Adrenal gland (tissue), 19 donors: ENCODE measurements at regions of chr17 and their contacts with region 1.

Region 1: GRCh38 chr17:64599187-64599676 is 62.9 kb downstream of the SMURF2 start:
- DNase-seq: no peak
- H3K4me3 ChIP-seq: no peak overlapping the region
- H3K27ac ChIP-seq: no peak overlapping the region
- H3K4me1 ChIP-seq: peaks cover 6 to 36% of the 10 kb centered on the region in 2 donors
- H3K27me3 ChIP-seq: no peaks in the 10 kb centered on the region
- CTCF ChIP-seq: no peak
- POLR2A ChIP-seq: no peak

Region 2: DNA sequence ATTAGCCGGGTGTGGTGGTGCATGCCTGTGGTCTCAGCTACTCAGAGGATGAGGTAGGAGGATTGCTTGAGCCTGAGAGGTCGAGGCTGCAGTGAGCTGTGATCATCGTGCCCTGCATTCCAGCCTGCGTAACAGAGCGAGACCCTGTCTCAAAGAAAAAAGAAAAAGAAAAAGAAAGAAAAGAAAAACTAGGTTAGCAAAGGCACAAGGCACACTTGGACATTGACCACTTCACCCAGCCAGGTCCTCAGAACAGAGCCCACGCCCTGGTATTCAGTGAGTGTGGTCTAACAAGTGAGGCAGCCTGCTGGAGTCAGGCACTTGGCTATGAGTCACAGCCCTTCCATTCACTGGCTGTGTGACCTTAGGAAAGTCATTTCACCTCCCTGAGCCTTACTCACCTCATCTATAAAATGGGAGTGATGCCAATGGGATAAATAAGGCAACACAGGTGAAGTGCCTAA is 139.9 kb before region 1 on chr17:
- intact Hi-C with region 1: no loop called
- DNase-seq: no peak
- H3K4me3 ChIP-seq: no peak overlapping the region
- H3K27ac ChIP-seq: no peak overlapping the region
- H3K4me1 ChIP-seq: no peaks in the 10 kb centered on the region
- H3K27me3 ChIP-seq: no peaks in the 10 kb centered on the region
- CTCF ChIP-seq: no peak
- POLR2A ChIP-seq: no peak

Region 3: GRCh38 chr17:64547319-64547718 is 51.9 kb before region 1 on chr17:
- intact Hi-C with region 1: no loop called
- DNase-seq: no peak
- H3K4me3 ChIP-seq: no peak overlapping the region
- H3K27ac ChIP-seq: no peak overlapping the region
- H3K4me1 ChIP-seq: no peaks in the 10 kb centered on the region
- H3K27me3 ChIP-seq: no peaks in the 10 kb centered on the region
- CTCF ChIP-seq: no peak
- POLR2A ChIP-seq: no peak

Region 4: DNA sequence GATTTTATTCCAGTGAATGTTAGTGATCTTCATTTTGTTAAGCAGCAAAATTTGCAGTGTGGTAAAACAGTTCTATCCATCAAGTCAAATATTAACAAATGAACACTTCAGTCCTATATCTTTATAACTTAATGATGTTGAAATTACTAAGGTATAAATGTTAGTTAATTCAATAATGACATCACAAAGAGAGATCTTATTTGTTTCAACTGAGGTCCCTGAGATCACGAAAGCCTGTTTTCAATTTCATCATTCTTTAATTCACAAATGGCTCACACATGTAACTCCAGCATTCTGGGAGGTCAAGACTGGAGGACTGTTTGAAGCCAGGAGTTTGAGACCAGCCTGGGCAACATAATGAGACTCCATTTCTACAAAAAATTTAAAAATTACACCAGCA is 49.0 kb after region 1 on chr17:
- intact Hi-C with region 1: loop called in 1 of 2 experiments (anchors 10 kb)
- DNase-seq: no peak
- H3K4me3 ChIP-seq: no peak overlapping the region
- H3K27ac ChIP-seq: no peak overlapping the region
- H3K4me1 ChIP-seq: peaks cover 3 to 26% of the 10 kb centered on the region in 2 donors
- H3K27me3 ChIP-seq: no peaks in the 10 kb centered on the region
- CTCF ChIP-seq: no peak
- POLR2A ChIP-seq: no peak